ENCODE measurements at regions of chr17 and their contacts with region 1.

Region 1: DNA sequence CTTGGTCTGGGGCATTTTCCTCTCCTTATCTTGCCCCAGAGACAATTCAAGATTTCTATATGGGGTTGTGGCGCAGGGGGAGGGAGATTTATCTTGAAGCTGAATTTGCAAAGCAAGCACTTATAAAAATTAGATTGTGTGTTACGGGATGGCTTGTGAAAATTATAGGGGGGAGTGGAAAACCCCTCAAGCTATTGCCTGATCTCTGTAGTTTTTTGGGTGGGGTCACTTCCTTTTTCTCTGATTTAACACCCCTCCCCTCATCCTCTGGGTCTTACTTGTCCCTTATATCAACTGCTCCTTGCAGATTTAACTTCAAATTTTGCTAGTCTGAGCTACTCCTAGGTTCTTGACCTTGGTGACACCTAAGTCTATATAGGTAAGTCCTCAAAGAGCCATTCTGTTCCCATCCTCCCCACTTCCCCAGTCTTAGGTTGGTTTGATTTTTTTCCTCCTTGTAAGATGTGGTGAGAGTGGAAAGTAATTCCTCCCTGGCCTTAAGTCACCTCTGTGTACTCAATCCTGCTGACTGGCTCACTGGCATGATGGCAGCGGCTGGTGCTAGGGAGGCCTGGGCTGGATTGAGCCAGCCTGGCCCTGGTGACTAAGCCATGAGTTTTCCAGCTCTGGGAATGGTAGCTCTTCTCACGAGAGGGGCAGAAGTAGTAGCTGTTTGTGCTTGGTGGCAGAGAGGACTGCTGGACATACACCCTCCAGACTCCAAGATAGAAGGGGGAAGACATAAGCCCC is 2.3 kb downstream of the ARL4D start:
- DNase-seq: no peak
- ATAC-seq: peak in 2 of 8 donors; percentile 18 to 49
- H3K4me3 ChIP-seq: peak overlapping the region in 9 of 10 donors; percentile 37 to 91 (median 70)
- H3K27ac ChIP-seq: peak overlapping the region in 2 of 10 donors; percentile 0 to 10
- H3K4me1 ChIP-seq: peaks cover 0 to 49% (median 18%) of the 10 kb centered on the region in 9 donors
- H3K27me3 ChIP-seq: no peaks in the 10 kb centered on the region
- CTCF ChIP-seq: no peak

Region 2: DNA sequence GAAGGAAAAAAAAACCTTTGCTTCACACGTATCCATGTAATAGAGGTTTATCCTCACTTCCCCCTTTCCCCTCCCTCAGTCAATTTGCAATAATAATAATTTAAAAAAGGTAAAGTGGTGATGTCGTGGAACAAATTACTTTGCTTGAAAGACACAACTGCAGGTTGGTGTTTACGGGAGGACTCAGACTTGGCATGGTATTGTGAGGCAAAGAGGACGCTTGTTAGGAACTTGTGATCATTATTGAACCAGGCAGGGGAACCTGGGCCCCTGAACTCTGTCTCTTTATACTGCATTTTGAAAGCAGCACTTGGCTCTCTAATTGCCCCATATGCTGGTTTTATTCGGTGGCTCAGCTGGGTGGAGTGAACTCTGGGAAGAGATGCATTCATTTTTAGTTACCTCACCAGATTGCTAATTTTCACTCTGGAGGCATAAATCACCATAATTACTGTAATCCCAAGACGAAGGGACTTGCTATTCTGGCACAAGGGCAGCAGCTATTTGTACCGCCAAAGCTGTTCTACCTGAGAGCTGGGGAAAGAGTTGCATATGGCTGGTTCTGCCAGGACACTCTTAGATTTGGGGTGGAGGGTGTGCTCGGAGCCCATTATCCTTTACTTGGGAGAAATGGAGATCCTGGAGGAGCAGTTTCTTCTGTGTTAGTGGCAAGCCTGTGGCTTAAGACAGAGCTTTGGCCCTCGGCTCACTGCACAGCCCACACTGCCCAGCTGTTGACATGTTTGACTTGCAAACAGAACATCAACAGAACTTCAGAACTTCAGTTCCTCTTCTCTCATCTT is 76.9 kb after region 1 on chr17:
- intact Hi-C with region 1: loop called in 3 of 10 experiments (anchors 1 to 2 kb)
- DNase-seq: no peak
- ATAC-seq: no peak
- H3K4me3 ChIP-seq: no peak overlapping the region
- H3K27ac ChIP-seq: no peak overlapping the region
- H3K4me1 ChIP-seq: peaks cover 0 to 3% (median 1%) of the 10 kb centered on the region in 9 donors
- H3K27me3 ChIP-seq: no peaks in the 10 kb centered on the region
- CTCF ChIP-seq: no peak

Region 3: DNA sequence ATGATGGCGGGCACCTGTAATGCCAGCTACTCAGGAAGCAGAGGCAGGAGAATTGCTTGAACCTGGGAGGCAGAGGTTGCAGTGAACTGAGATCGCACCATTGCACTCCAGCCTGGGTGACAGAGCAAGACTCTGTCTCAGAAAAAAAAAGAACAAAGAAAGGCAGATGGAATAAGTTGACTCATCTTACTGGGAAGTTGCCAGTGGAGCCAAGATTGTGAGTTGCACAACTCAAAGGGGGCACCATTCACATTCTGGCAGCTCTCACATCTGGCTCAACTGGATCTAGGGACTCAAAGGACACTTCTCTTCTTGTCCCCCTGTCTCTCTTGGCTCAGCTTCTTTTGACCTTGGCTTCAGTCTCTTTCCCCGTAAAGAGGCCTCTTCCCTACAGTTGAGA is 198.7 kb after region 1 on chr17:
- intact Hi-C with region 1: no loop called
- DNase-seq: no peak
- ATAC-seq: peak in 1 of 8 donors; percentile 36
- H3K4me3 ChIP-seq: no peak overlapping the region
- H3K27ac ChIP-seq: peak overlapping the region in 2 of 10 donors; percentile 15 to 70
- H3K4me1 ChIP-seq: peaks cover 0 to 32% (median 18%) of the 10 kb centered on the region in 9 donors
- H3K27me3 ChIP-seq: no peaks in the 10 kb centered on the region
- CTCF ChIP-seq: no peak

Measured in heart right ventricle (tissue), 16 donors.